ENCODE measurements at regions of chr2 and their contacts with region 1.

Region 1: GRCh38 chr2:206981739-206982340 is 42.5 kb downstream of the CPO start:
- DNase-seq: peak; percentile 73
- H3K4me3 ChIP-seq: no peak overlapping the region
- H3K27ac ChIP-seq: no peak overlapping the region
- H3K4me1 ChIP-seq: peaks cover 28% of the 10 kb centered on the region
- H3K27me3 ChIP-seq: no peaks in the 10 kb centered on the region
- CTCF ChIP-seq: peak; percentile 92

Region 2: GRCh38 chr2:206642075-206643025 is 339.5 kb before region 1 on chr2 and contains the start of gene FAM237A:
- intact Hi-C with region 1: no loop called
- DNase-seq: no peak
- H3K4me3 ChIP-seq: peak within 1 kb of the TSS; percentile 49
- H3K27ac ChIP-seq: no peak within 1 kb of the TSS
- H3K4me1 ChIP-seq: peaks cover 7% of the 10 kb centered on the region
- H3K27me3 ChIP-seq: peaks cover 77% of the 10 kb centered on the region
- CTCF ChIP-seq: no peak
- total RNA-seq, gene FAM237A: not detected

Region 3: GRCh38 chr2:206800506-206801417 is 181.1 kb before region 1 on chr2:
- intact Hi-C with region 1: loop called (anchors 10 kb)
- DNase-seq: peak; percentile 31
- H3K4me3 ChIP-seq: no peak overlapping the region
- H3K27ac ChIP-seq: no peak overlapping the region
- H3K4me1 ChIP-seq: peaks cover 35% of the 10 kb centered on the region
- H3K27me3 ChIP-seq: no peaks in the 10 kb centered on the region
- CTCF ChIP-seq: peak; percentile 81

Region 4: DNA sequence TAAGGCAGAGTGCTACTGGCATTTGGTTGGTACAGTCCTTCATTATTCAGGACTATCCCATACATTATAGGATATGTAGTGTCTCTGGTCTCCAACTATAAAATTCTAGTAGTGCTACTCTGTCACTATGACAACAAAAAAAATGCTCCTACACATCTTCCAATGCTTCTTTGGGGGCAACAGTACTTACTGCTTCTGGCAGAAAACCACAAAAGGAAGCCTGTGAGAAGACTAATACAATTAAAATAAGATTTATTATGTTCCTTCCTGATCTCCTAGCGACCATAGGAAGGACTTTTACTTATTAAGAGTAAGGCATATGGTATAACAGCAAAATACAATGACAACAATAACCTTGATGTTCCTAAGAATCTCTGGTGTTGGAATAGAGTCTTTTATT is 90.9 kb before region 1 on chr2:
- intact Hi-C with region 1: no loop called
- DNase-seq: no peak
- H3K4me3 ChIP-seq: no peak overlapping the region
- H3K27ac ChIP-seq: no peak overlapping the region
- H3K4me1 ChIP-seq: no peaks in the 10 kb centered on the region
- H3K27me3 ChIP-seq: no peaks in the 10 kb centered on the region
- CTCF ChIP-seq: no peak

Region 5: DNA sequence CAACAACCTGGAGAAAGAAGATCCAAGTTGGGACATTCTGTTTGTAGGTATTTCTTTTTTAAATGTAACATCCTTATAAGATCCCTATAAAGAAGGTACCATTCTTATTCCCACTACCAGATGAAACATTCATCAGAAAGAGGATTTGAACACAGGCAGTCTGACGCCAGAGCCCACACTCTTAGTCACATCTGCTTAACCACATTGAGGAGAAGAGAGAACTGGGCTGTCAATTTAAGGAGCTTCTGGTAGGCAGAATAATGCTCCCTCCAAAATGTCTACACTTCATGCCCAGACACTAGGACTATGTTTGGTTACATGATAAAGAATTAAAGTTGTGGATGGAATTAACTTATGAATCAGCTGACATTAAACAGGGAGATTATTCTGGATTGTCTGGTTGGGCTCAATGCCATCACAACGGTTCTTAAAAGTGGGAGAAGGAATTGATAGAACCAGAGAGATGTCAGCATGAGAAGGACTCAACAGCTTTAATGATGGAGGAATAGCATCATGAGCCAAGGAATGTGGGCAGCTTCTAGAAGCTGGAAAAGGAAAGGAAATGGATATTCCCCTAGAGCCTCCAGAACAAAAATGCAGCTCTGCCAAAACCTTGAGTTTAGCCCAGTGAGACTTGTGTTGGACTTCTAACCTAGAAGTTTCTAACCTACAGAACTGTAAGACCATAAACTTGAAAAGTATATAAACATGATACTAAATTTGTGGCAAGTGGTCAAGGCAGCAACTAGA is 101.7 kb after region 1 on chr2:
- intact Hi-C with region 1: no loop called
- DNase-seq: no peak
- H3K4me3 ChIP-seq: no peak overlapping the region
- H3K27ac ChIP-seq: peak overlapping the region; percentile 87
- H3K4me1 ChIP-seq: peaks cover 67% of the 10 kb centered on the region
- H3K27me3 ChIP-seq: no peaks in the 10 kb centered on the region
- CTCF ChIP-seq: no peak

Region 6: DNA sequence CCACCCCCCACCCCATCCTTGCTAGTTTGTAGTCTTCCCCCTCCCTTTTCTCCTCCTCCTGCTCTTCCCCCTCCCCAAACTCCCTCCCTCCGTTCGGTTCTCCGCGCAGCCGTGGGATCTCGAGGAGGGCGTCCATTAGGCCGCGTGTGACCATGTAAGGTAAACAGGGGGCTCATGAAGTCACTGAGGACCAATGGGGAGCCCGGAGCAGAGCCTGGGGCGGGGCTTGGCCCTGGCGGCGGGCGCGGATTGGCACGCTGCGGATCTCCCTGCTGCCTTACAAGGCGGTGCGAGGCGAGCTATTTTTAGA is 184.2 kb after region 1 on chr2:
- intact Hi-C with region 1: loop called (anchors 10 kb)
- DNase-seq: peak; percentile 99
- H3K4me3 ChIP-seq: peak overlapping the region; percentile 85
- H3K27ac ChIP-seq: peak overlapping the region; percentile 100
- H3K4me1 ChIP-seq: peaks cover 66% of the 10 kb centered on the region
- H3K27me3 ChIP-seq: no peaks in the 10 kb centered on the region
- CTCF ChIP-seq: no peak

Region 7: DNA sequence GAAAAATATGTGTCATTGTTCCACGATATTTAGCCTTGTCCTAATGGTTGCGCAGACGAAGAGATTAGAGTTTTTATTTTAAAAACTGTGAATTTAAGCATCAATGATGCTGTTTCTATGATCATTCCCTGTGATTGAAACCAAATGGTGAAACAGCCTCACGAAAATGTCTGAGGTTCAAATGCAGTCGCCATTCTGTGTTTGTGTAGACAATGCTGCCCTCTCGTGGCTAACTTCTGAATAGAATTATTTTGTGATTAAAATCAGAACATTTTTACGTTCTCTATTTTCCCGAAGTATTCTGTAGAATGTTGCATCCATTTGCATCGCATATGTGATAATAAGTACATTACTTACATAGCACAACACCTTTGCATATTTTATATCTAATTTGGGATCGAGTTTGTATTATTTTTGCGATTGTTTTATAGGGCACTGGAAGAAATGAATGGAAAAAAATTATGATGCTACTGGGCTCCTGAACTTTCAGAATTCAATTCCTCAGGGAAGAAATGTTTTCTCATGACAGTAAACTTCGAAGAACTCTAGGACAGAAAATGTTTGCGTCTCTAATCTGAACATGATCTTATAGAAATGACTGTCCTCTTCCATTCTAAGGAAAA is 493.1 kb after region 1 on chr2:
- intact Hi-C with region 1: loop called (anchors 2 kb)
- DNase-seq: no peak
- H3K4me3 ChIP-seq: peak overlapping the region; percentile 36
- H3K27ac ChIP-seq: no peak overlapping the region
- H3K4me1 ChIP-seq: peaks cover 27% of the 10 kb centered on the region
- H3K27me3 ChIP-seq: no peaks in the 10 kb centered on the region
- CTCF ChIP-seq: peak; percentile 76